Testis (tissue), 5 donors: ENCODE measurements at regions of chr6 and their contacts with region 1.

Region 1: GRCh38 chr6:158704181-158704822 is 54.4 kb downstream of the SYTL3 start:
- DNase-seq: peak; percentile 81
- H3K4me3 ChIP-seq: peak overlapping the region in 1 of 2 donors; percentile 41
- H3K27ac ChIP-seq: peak overlapping the region; percentile 59 to 64
- H3K4me1 ChIP-seq: peaks cover 42% of the 10 kb centered on the region
- H3K27me3 ChIP-seq: no peaks in the 10 kb centered on the region
- CTCF ChIP-seq: peak; percentile 95 to 96 (median 96)
- POLR2A ChIP-seq: no peak

Region 2: GRCh38 chr6:158344534-158344933 is 359.8 kb before region 1 on chr6:
- intact Hi-C with region 1: no loop called
- DNase-seq: no peak
- H3K4me3 ChIP-seq: no peak overlapping the region
- H3K27ac ChIP-seq: no peak overlapping the region
- H3K4me1 ChIP-seq: no peaks in the 10 kb centered on the region
- H3K27me3 ChIP-seq: no peaks in the 10 kb centered on the region
- CTCF ChIP-seq: no peak
- POLR2A ChIP-seq: no peak

Region 3: DNA sequence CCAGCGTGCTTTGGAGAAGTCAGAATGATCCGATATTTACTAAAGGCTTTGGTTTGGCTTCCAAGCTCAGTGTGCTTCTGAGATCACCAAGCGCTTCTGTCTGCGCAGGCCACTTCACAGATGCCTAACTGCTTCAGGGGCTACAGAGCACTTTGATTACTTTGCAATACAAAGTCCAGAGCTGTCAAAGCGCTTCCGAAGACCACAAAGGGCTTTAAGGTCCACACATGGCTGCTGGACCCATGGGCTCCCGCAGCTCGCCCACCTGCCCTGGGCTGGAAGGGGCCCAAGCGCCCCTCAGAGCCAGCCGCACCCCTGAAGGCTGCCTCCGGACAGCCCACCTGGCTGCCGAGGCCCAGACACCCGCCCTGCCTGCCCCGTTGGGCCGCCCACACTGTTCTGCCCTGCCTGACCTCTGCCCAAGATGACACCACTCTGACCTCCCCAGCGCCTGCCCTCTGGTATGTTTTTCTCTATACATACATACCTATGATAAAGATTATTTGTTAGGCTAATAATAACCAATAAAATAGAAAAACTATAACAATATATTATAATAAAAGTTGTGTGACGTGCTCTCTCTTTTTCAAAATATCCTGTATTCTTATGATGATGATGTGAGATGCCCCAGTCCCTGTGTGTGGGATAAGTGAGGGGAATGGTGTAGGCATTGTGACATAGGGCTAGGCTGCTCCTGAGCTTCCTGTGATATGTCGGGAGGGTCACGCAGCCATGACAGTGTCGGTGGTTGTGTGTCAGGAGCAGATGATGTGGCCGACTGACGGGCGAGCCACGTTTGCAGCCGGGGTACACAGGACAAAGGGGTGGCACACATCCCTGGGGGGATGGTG is 82.4 kb before region 1 on chr6:
- intact Hi-C with region 1: no loop called
- DNase-seq: no peak
- H3K4me3 ChIP-seq: no peak overlapping the region
- H3K27ac ChIP-seq: peak overlapping the region; percentile 59 to 69
- H3K4me1 ChIP-seq: peaks cover 45% of the 10 kb centered on the region
- H3K27me3 ChIP-seq: no peaks in the 10 kb centered on the region
- CTCF ChIP-seq: no peak
- POLR2A ChIP-seq: no peak

Region 4: DNA sequence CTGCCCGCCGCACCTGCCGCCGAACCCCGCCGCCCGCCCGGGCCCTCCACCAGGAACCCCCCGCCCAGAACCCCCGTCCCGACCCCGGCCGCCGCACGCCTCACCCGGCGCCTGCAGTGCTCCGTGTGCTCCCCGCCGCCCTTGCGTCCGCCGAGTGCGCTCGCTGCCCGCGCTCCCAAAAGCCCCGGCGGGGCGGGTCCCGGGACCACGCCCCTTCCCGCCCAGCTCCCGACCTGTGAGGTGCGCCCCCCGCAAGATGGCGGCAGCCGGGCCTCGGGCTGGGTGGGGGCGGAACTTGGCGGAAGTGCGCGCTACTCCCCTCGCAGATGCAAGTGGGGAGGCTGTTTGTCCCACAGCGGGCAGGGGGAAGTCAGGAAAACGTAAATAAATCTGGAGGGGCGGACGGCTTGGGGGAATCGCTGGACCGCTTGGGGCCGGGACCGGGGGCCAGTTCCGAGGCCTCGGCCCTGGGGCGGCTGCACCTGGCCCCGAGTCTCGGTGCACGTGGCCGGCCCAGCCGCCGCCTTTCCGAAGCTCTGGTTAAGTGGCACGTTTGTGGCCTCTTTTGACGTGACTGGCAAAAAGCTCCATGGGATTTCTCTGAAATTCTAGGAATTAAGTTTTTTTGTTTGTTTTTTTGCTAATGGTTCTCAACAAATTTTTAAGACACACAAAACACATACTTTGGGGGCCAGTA is 115.1 kb after region 1 on chr6 and contains the start of gene EZR:
- intact Hi-C with region 1: loop called (anchors 10 kb)
- DNase-seq: peak; percentile 92
- H3K4me3 ChIP-seq: peak within 1 kb of the TSS; percentile 88 to 98
- H3K27ac ChIP-seq: peak within 1 kb of the TSS; percentile 96 to 97
- H3K4me1 ChIP-seq: peaks cover 11% of the 10 kb centered on the region
- H3K27me3 ChIP-seq: no peaks in the 10 kb centered on the region
- CTCF ChIP-seq: no peak
- POLR2A ChIP-seq: no peak
- total RNA-seq, gene EZR: 164 to 199 TPM

Region 5: GRCh38 chr6:158972241-158973233 is 268.2 kb after region 1 on chr6:
- intact Hi-C with region 1: loop called (anchors 5 kb)
- DNase-seq: no peak
- H3K4me3 ChIP-seq: no peak overlapping the region
- H3K27ac ChIP-seq: no peak overlapping the region
- H3K4me1 ChIP-seq: no peaks in the 10 kb centered on the region
- H3K27me3 ChIP-seq: no peaks in the 10 kb centered on the region
- CTCF ChIP-seq: peak; percentile 43 to 58 (median 55)
- POLR2A ChIP-seq: no peak